ENCODE measurements at regions of chr7 and their contacts with region 1.

Region 1: DNA sequence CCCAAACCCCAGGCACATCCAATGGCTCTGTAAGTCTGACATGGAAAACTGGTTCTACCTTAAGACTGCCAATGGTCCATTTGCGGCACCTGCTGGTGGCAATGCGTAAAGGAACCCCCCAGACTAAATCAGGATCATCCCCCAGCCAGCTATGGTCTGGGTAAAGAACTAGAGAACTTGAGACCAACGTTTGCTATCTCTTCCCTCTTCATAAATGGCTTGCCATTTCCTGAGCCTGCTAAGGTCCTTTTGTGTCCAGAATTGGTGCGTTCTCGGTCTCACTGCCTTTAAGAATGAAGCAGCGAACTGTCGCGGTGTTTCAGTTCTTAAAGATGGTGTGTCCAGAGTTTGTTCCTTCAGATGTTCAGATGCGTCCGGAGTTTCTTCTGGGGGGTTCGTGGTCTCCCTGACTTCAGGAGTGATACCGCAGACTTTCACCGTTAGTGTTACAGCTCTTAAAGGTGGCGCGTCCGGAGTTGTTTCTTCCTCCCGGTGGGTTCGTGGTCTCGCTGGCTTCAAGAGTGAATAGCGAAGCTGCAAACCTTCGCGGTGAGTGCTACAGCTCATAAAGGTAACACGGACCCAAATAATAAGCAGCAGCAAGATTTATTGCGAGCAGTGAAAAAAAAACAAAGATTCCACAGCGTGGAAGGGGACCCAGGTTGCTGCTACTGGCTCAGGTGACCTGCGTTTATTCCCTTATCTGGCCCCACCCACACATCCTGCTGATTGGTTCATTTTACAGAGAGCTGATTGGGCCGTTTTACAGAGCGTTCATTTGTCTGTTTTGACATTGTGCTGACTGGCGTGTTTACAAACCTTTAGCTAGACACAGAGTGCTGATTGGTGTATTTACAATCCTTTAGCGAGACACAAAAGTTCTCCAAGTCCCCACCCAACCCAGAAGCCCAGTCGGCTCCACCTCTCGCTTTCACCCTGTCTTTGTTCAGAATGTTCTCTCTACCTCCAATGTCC is 95.4 kb downstream of the ELMO1 start:
- DNase-seq: peak; percentile 71
- H3K4me3 Mint-ChIP-seq: peak overlapping the region; percentile 90
- H3K27ac Mint-ChIP-seq: peak overlapping the region; percentile 84
- H3K4me1 Mint-ChIP-seq: peaks cover 72% of the 10 kb centered on the region
- H3K27me3 Mint-ChIP-seq: no peaks in the 10 kb centered on the region

Region 2: GRCh38 chr7:37208528-37208927 is 144.7 kb before region 1 on chr7:
- intact Hi-C with region 1: loop called (anchors 1 kb)
- DNase-seq: peak; percentile 19
- H3K4me3 Mint-ChIP-seq: no peak overlapping the region
- H3K27ac Mint-ChIP-seq: peak overlapping the region; percentile 65
- H3K4me1 Mint-ChIP-seq: peaks cover 21% of the 10 kb centered on the region
- H3K27me3 Mint-ChIP-seq: no peaks in the 10 kb centered on the region

Region 3: DNA sequence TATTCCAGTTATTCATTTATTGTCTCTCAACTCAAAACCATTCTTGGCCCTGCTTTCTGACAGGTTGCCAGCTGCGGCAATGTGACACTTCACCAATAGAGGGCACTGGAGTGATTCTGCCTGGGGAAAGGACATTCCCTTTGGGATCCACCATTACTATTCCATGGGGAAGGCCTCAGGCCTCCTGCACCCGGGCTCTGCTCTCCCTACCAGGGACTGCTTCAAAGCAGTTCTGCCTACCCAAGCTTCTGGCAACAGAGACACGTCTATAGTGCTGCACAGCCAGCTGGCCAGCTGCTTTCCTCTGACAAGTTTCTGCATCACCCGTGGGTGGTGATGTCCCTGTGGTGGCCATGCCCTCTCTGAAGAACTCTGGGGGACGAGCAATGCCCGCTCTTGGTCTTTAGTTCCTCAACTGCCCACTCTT is 68.4 kb before region 1 on chr7:
- intact Hi-C with region 1: loop called (anchors 1 kb)
- DNase-seq: no peak
- H3K4me3 Mint-ChIP-seq: no peak overlapping the region
- H3K27ac Mint-ChIP-seq: no peak overlapping the region
- H3K4me1 Mint-ChIP-seq: peaks cover 41% of the 10 kb centered on the region
- H3K27me3 Mint-ChIP-seq: no peaks in the 10 kb centered on the region

Region 4: GRCh38 chr7:37440738-37441385 is 87.6 kb after region 1 on chr7:
- intact Hi-C with region 1: loop called (anchors 2 kb)
- DNase-seq: peak; percentile 18
- H3K4me3 Mint-ChIP-seq: peak overlapping the region; percentile 40
- H3K27ac Mint-ChIP-seq: peak overlapping the region; percentile 86
- H3K4me1 Mint-ChIP-seq: peaks cover 38% of the 10 kb centered on the region
- H3K27me3 Mint-ChIP-seq: no peaks in the 10 kb centered on the region

Region 5: DNA sequence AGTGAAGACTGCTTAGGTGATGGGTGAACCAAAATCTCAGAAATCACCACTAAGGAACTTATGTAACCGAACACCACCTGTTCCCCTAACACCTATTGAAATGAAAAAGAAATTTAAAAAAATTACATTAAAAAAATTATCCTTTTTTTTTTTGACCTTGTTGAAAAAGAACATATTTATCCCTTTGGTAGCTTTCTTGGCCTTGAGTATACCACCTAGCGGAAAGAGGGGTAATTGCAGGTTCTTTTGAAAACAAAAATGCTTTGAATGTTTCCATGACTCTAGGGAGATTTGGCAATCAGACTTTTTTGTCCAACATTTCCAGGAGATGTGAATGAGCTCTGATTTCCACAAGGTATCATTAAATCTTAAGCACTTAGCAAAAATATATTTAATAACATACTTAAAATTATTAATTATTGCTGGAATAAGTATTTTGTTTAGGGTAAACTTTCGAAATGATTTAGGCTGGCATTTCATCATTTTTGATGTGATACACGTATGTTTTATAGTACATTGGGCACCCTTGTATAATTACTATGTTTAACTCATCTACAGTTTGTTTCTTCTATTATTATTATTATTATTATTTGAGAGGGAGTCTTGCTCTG is 142.4 kb after region 1 on chr7:
- intact Hi-C with region 1: loop called (anchors 5 kb)
- DNase-seq: no peak
- H3K4me3 Mint-ChIP-seq: no peak overlapping the region
- H3K27ac Mint-ChIP-seq: no peak overlapping the region
- H3K4me1 Mint-ChIP-seq: peaks cover 11% of the 10 kb centered on the region
- H3K27me3 Mint-ChIP-seq: no peaks in the 10 kb centered on the region

Region 6: GRCh38 chr7:37930226-37930948 is 577.1 kb after region 1 on chr7:
- intact Hi-C with region 1: no loop called
- DNase-seq: no peak
- H3K4me3 Mint-ChIP-seq: no peak overlapping the region
- H3K27ac Mint-ChIP-seq: no peak overlapping the region
- H3K4me1 Mint-ChIP-seq: no peaks in the 10 kb centered on the region
- H3K27me3 Mint-ChIP-seq: no peaks in the 10 kb centered on the region